SK-N-SH (cell line): ENCODE measurements at regions of chr10 and their contacts with region 1.

Region 1: DNA sequence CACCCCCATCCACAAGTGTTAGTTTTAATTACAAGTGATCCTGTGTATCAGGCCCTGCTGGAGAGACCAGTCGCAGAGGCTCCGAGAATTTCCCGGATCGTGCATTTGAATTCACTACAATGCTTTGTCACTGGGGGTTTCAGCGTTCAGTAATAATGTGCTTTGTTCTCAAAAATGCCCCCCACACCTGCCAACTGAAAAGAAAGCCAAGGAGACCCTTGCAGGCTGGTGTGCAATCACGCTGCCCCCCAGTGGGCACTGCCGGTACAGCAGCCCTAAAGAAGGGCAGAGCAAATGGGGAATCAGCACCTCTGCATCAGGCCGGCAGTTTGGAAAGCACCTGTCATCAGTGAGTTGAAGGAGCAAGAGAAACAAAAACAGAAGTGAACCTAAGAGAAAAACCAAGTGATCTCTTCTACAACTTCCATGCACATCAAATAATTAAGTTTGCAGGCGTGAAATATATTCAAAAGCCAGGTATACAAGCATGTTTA is 177.6 kb downstream of the PARD3 start:
- DNase-seq: peak; percentile 67
- H3K4me3 ChIP-seq: no peak overlapping the region; a peak in 1 of 4 replicates
- H3K27ac ChIP-seq: peak overlapping the region in 1 of 2 experiments; percentile 27; a peak in 1 of 4 replicates
- H3K4me1 ChIP-seq: peaks cover 0 to 7% of the 10 kb centered on the region in 2 experiments; a peak in 3 of 4 replicates
- H3K27me3 ChIP-seq: no peaks in the 10 kb centered on the region
- CTCF ChIP-seq: peak; percentile 99
- EP300 ChIP-seq: no peak
- RAD21 ChIP-seq: peak; percentile 87

Region 2: GRCh38 chr10:33193057-33193700 is 1444.3 kb before region 1 on chr10:
- CTCF ChIA-PET with region 1: interaction called, 51 read pairs
- POLR2A ChIA-PET with region 1: no interaction called
- DNase-seq: peak; percentile 68
- H3K4me3 ChIP-seq: peak overlapping the region in 1 of 2 experiments; percentile 32; a peak in 1 of 4 replicates
- H3K27ac ChIP-seq: peak overlapping the region; percentile 62 to 64; a peak in 3 of 4 replicates
- H3K4me1 ChIP-seq: peaks cover 4 to 34% of the 10 kb centered on the region in 2 experiments; a peak in 3 of 4 replicates
- H3K27me3 ChIP-seq: no peaks in the 10 kb centered on the region
- CTCF ChIP-seq: peak; percentile 88
- EP300 ChIP-seq: peak in 1 of 2 experiments; percentile 25; a peak in 1 of 4 replicates
- RAD21 ChIP-seq: peak; percentile 91

Region 3: DNA sequence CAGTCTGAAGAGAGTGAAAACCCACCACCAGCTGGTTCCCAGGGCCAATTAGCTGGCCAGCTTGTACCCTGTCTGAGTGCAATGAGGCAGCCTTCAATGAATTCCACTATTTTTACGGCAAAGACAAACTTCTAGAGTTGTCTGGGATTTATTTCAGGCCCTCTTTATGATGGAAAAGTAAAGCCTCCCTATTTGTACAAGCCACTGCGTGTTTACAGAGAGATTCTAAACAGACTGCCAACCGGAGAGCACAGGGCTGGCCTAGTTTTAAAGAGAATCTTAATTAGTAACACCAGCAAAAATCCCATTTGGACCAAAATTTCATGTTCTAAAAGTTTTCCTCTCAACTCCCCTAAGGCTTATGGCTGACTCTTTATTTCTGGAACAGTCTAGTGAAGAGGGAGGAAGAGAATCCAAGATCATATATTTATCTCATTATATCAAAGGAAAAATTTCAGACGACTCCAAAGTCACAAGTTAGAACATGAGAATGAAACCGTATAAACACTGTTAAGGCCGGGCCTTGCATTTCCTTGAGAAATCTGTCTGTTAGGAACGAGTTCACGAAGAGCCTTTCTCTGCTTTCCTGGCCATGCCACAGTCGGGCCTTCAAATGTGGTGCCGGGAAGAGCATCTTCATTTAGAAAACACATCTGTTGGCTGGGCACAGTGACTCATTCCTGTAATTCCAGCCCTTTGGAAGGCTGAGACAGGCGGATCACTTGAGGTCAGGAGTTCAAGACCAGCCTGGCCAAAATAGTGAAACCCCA is 578.4 kb before region 1 on chr10:
- CTCF ChIA-PET with region 1: no interaction called
- POLR2A ChIA-PET with region 1: no interaction called
- DNase-seq: no peak
- H3K4me3 ChIP-seq: no peak overlapping the region
- H3K27ac ChIP-seq: no peak overlapping the region
- H3K4me1 ChIP-seq: no peaks in the 10 kb centered on the region
- H3K27me3 ChIP-seq: no peaks in the 10 kb centered on the region
- CTCF ChIP-seq: no peak
- EP300 ChIP-seq: no peak
- RAD21 ChIP-seq: no peak

Region 4: GRCh38 chr10:34240039-34240438 is 397.4 kb before region 1 on chr10:
- CTCF ChIA-PET with region 1: interaction called, 11 read pairs
- POLR2A ChIA-PET with region 1: no interaction called
- DNase-seq: no peak
- H3K4me3 ChIP-seq: no peak overlapping the region
- H3K27ac ChIP-seq: no peak overlapping the region
- H3K4me1 ChIP-seq: peaks cover 0 to 5% of the 10 kb centered on the region in 2 experiments; a peak in 2 of 4 replicates
- H3K27me3 ChIP-seq: no peaks in the 10 kb centered on the region
- CTCF ChIP-seq: no peak
- EP300 ChIP-seq: no peak
- RAD21 ChIP-seq: no peak

Region 5: GRCh38 chr10:34423673-34424625 is 213.5 kb before region 1 on chr10:
- CTCF ChIA-PET with region 1: no interaction called
- POLR2A ChIA-PET with region 1: no interaction called
- DNase-seq: no peak
- H3K4me3 ChIP-seq: no peak overlapping the region
- H3K27ac ChIP-seq: no peak overlapping the region
- H3K4me1 ChIP-seq: no peaks in the 10 kb centered on the region
- H3K27me3 ChIP-seq: no peaks in the 10 kb centered on the region
- CTCF ChIP-seq: no peak
- EP300 ChIP-seq: no peak
- RAD21 ChIP-seq: no peak

Region 6: DNA sequence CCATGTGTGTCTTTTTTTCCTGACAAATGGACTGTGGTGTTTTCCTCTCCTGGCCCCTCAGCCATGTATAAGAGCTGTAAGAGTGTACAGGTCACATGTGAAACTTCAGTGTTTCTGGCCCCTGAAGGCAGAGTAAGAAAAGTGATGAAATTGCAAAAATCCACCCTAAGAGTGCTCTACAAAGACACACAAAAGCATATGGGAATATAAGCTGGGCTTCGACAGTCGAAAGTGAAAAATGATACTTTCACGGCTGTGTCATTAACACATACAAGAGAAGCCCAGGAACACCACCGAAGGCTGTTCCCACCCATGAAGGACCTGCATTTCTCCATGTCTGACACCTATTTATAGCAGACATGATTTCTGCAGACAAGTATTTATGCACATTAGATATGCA is 14.5 kb before region 1 on chr10:
- CTCF ChIA-PET with region 1: interaction called, 39 read pairs
- POLR2A ChIA-PET with region 1: no interaction called
- DNase-seq: no peak
- H3K4me3 ChIP-seq: no peak overlapping the region
- H3K27ac ChIP-seq: no peak overlapping the region
- H3K4me1 ChIP-seq: peaks cover 0 to 4% of the 10 kb centered on the region in 2 experiments; a peak in 2 of 4 replicates
- H3K27me3 ChIP-seq: no peaks in the 10 kb centered on the region
- CTCF ChIP-seq: no peak
- EP300 ChIP-seq: no peak
- RAD21 ChIP-seq: no peak

Region 7: DNA sequence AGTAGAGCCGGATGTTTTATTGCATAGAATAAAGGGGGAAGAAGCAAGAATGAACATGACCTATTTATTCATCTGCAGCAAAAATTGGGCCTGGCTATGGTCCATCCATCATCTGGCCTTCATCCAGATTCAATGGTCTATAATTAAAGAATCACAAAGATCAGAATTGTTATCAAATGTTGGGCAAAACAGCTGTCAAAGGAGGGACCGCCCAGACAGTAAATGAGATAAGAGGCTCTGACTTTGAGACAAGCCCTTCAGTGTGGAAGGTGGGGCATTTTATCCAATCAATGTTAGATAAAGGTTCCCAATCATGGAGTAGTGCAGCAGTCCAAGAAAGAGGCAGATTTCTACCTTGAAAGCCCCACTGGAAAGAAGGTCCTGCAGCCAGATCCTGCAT is 24.1 kb after region 1 on chr10:
- CTCF ChIA-PET with region 1: interaction called, 12 read pairs
- POLR2A ChIA-PET with region 1: no interaction called
- DNase-seq: no peak
- H3K4me3 ChIP-seq: no peak overlapping the region
- H3K27ac ChIP-seq: no peak overlapping the region
- H3K4me1 ChIP-seq: peaks cover 7 to 12% of the 10 kb centered on the region in 2 experiments; a peak in 3 of 4 replicates
- H3K27me3 ChIP-seq: no peaks in the 10 kb centered on the region
- CTCF ChIP-seq: no peak
- EP300 ChIP-seq: no peak
- RAD21 ChIP-seq: no peak